Dendritic cell treated with granulocyte-macrophage colony-stimulating factor and Interleukin-4, amounts not matched to agents 40 ng/mL and 50 ng/mL, for 4 days (primary cell): ENCODE measurements at regions of chr19 and their contacts with region 1.

Region 1: GRCh38 chr19:53553884-53554791 is 16.2 kb downstream of the ZNF331 start:
- H3K4me3 Mint-ChIP-seq: peak overlapping the region; percentile 89
- H3K27ac Mint-ChIP-seq: peak overlapping the region; percentile 93
- H3K4me1 Mint-ChIP-seq: peaks cover 38% of the 10 kb centered on the region
- H3K27me3 Mint-ChIP-seq: no peaks in the 10 kb centered on the region

Region 2: GRCh38 chr19:53511933-53512374 is 42.2 kb before region 1 on chr19:
- intact Hi-C with region 1: no loop called
- H3K4me3 Mint-ChIP-seq: no peak overlapping the region
- H3K27ac Mint-ChIP-seq: no peak overlapping the region
- H3K4me1 Mint-ChIP-seq: no peaks in the 10 kb centered on the region
- H3K27me3 Mint-ChIP-seq: peaks cover 2% of the 10 kb centered on the region

Region 3: DNA sequence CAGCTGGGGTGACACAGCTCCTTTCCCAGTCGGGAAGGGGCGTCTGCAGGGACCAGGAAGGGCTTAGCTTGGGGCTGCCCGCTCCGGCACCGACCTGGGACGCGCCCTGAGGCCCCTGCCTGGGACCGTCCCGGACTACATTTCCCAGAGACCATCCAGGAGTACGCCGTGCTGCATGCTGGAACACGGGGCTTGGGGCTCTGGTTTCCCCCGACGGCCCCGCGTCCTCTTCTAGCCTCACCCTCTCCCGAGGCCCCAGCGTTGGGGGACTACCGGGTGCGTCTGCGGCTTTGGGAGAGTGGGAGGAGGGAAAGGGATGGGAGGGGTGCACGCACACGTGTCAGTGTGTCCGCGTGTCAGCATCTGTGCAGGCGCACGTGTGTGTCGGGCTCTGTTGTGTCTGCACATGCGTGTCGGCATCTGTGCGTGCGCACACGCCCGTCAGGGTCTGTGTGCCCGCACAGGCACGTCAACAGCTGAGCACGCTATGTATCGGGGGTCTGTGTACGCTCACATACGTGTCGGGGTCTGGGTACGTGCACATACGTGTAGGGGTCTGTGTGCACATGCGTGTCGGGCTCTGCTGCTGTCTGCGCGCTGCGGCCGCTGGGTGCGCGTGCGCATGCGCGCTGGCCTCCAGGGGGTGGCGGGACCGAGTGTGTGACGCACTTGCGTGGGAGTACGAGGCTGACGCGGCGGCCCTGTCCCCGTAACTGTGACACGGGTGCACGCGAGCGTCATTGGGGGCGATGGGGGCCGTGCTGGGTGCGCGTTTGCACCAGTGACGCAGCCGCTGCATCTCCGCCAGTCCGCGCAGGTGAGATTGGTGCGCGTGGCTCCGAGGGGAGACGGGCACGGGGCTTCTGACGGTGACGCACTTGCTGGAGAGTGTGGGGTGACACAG is 16.4 kb before region 1 on chr19 and contains the start of gene ZNF331:
- intact Hi-C with region 1: loop called (anchors 1 kb)
- H3K4me3 Mint-ChIP-seq: peak within 1 kb of the TSS; percentile 92
- H3K27ac Mint-ChIP-seq: peak within 1 kb of the TSS; percentile 92
- H3K4me1 Mint-ChIP-seq: no peaks in the 10 kb centered on the region
- H3K27me3 Mint-ChIP-seq: no peaks in the 10 kb centered on the region

Region 4: DNA sequence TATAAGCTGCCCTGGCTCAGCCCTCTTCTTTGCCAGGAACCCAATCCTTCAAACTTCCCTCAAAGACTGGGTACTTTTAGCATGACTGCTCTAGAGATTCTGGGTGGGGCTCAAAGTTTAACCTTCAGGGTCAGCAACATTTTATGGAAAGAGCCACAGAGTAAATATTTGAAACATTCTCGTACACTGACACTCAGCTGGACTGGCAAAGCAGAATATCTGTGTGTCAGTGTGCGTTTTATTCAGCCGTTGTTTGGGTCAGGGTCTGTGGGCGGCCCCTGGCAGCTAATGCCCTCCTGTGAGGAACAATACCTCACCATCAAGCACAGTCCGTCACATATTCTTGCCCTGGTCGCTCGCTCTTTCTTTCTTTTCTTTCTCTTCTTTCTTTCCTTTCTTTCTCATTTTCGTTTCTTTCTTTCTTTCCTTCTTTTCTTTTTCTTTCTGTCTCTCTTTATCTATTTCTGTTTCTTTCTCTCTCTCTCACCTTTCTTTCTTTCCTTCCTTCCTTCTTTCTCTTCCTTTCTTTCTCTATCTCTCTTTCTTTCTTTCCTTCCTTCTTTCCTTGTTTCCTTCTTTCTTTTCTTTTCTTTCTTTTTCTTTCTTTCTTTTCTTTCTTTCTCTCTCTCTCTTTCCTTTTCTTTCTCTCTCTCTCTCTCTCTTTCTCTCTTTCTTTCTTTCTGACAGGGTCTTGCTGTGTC is 88.4 kb after region 1 on chr19:
- intact Hi-C with region 1: no loop called
- H3K4me3 Mint-ChIP-seq: no peak overlapping the region
- H3K27ac Mint-ChIP-seq: no peak overlapping the region
- H3K4me1 Mint-ChIP-seq: no peaks in the 10 kb centered on the region
- H3K27me3 Mint-ChIP-seq: no peaks in the 10 kb centered on the region